WTC11 (cell line): ENCODE measurements at regions of chr1 and their contacts with region 1.

Region 1: DNA sequence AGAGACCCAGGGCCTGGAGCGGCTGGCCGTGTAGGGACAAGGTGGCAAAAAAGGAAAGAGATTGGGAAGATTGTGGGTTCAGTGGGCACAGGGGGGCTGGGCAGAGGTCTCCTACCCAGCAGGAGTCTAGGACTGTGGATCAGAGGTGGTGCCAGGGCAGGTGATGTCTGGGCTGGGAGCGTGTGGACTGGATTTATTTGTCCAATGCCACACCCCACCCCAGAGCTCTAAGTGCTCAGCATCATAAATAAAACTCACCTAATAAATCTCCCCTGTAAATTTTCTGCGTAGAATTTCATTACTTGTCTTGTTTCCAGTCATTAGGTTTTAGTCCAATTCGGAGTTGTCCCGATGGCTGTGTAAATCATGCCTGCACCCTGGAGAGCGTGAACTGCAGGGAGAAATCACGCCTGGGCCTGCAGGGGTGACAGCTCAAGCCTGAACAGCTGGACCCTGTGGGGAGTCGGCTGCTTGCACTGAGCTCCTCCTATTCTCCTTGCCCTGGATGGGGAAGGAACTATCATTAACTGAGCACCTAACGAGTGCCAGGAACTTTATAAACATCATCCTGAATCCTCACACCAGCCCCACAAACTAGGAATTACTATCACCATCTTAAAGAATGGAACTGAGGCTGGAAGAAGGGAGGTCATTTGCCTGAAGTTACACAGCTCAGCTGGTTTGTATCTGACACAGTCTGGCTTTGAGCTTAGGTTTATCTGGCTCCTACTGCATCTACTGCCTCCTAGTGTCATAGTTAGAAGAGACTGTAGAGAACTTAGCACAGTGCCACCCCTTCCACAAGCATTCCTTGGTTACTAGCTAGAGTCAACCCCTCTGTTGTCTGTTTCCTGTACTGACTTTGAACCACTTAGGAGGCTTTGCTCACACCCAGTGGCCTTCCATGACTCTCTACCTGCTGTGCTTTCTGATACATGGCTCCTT is 25.0 kb upstream of the POU3F1 start:
- DNase-seq: no peak
- ATAC-seq: peak; percentile 83
- H3K4me3 Mint-ChIP-seq: no peak overlapping the region
- H3K27ac Mint-ChIP-seq: no peak overlapping the region
- H3K4me1 Mint-ChIP-seq: peaks cover 55% of the 10 kb centered on the region
- H3K27me3 Mint-ChIP-seq: no peaks in the 10 kb centered on the region
- CTCF ChIP-seq: no peak

Region 2: DNA sequence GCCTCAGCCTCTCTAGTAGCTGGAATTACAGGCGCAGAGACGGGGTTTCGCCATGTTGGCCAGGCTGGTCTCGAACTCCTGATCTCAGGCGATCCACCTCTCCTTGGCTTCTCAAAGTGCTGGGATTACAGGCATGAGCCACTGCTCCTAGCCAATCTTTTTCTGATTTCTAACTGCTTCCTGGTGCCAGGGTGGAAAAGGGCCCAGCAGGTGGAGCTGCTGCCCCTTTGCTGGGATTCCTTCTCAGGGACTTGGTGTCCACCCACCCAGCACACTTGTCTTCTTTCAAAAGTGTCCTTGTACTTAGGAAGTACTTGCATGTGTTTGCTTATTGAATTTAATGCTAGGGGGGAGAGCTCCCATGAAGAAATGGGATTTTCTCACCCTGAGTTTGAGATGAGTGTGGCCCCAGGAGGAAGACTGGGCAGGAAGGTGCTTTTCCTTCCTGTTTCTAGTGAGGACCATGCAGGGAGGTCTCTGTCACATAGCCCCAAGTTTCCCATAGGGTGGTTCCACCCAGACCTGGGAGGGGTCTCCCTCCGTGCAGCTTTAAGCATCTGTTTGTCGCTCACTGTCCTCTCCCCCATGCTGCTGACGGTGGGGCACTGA is 44.9 kb before region 1 on chr1:
- CTCF ChIA-PET with region 1: interaction called, 79 read pairs
- POLR2A ChIA-PET with region 1: interaction called, 3 read pairs
- DNase-seq: peak; percentile 74
- ATAC-seq: peak; percentile 19
- H3K4me3 Mint-ChIP-seq: no peak overlapping the region
- H3K27ac Mint-ChIP-seq: peak overlapping the region; percentile 57; the same call in 1 of the 2 replicates
- H3K4me1 Mint-ChIP-seq: peaks cover 54% of the 10 kb centered on the region
- H3K27me3 Mint-ChIP-seq: no peaks in the 10 kb centered on the region
- CTCF ChIP-seq: peak; percentile 62

Region 3: GRCh38 chr1:38046884-38047602 is 24.5 kb before region 1 on chr1:
- CTCF ChIA-PET with region 1: interaction called, 90 read pairs
- POLR2A ChIA-PET with region 1: interaction called, 3 read pairs
- DNase-seq: peak; percentile 82
- ATAC-seq: peak; percentile 61
- H3K4me3 Mint-ChIP-seq: peak overlapping the region; percentile 78
- H3K27ac Mint-ChIP-seq: no peak overlapping the region
- H3K4me1 Mint-ChIP-seq: peaks cover 48% of the 10 kb centered on the region
- H3K27me3 Mint-ChIP-seq: peaks cover 52% of the 10 kb centered on the region
- CTCF ChIP-seq: no peak

Region 4: DNA sequence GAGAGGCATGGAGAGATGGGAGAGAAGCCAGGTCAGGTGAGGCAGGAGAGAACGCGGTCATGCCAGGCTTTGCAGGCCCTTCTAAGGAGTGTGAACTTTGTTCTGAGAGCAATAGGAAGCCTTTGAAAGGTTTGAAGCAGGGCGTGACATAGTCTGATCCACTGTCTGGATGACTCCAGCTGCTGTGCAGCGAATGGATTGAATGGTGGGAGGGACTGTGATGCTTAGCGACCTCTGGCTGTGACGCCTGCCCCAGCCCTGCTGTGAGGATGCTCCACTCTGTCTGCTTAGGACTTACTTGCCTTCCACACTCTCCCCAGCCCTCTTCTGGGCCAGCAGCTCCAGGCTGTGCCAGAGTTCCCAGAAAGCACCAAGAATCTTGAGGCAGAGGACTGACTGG is 16.8 kb after region 1 on chr1:
- CTCF ChIA-PET with region 1: interaction called, 22 read pairs
- POLR2A ChIA-PET with region 1: no interaction called
- DNase-seq: no peak
- ATAC-seq: peak; percentile 38
- H3K4me3 Mint-ChIP-seq: no peak overlapping the region
- H3K27ac Mint-ChIP-seq: no peak overlapping the region
- H3K4me1 Mint-ChIP-seq: peaks cover 68% of the 10 kb centered on the region
- H3K27me3 Mint-ChIP-seq: no peaks in the 10 kb centered on the region
- CTCF ChIP-seq: no peak

Region 5: DNA sequence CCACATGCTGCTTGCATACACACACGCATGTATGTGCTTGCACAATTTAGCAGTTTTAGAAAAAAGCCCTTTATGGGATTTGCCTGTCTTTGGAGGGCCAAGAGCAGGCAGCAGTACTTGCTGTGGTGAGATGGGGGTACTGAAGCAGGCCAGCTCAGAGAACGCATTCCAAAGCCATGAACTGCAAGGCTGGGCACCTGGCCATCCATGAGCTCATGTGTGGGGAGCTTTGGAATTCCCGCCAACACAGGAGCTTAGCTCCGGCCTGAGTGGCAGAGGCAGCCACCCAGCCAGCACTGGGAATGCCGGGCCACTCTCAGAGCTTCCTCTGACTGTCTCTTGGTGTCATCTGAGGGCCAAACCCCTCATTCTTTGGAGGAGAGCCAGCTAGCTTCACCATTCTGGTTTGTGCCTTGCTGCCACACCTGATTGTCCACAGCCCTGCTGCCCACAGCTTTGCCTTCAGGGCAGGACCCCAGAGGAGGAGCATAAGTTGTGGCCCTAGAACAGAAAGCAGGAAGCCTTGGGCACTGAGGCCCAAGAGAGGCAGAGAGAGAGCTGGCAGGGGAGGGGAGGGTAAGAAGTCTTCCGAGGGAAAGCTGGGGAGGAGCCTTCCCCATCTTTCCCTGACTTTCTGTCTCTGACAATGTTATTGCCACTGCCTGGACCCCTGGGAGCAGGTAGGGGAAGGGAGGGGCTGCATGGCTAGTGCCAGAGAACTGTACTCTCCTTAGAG is 67.1 kb after region 1 on chr1:
- CTCF ChIA-PET with region 1: interaction called, 21 read pairs
- POLR2A ChIA-PET with region 1: no interaction called
- DNase-seq: no peak
- ATAC-seq: no peak
- H3K4me3 Mint-ChIP-seq: no peak overlapping the region
- H3K27ac Mint-ChIP-seq: no peak overlapping the region
- H3K4me1 Mint-ChIP-seq: peaks cover 71% of the 10 kb centered on the region
- H3K27me3 Mint-ChIP-seq: peaks cover 37% of the 10 kb centered on the region
- CTCF ChIP-seq: no peak